ENCODE measurements at regions of chr7 and their contacts with region 1.

Region 1: DNA sequence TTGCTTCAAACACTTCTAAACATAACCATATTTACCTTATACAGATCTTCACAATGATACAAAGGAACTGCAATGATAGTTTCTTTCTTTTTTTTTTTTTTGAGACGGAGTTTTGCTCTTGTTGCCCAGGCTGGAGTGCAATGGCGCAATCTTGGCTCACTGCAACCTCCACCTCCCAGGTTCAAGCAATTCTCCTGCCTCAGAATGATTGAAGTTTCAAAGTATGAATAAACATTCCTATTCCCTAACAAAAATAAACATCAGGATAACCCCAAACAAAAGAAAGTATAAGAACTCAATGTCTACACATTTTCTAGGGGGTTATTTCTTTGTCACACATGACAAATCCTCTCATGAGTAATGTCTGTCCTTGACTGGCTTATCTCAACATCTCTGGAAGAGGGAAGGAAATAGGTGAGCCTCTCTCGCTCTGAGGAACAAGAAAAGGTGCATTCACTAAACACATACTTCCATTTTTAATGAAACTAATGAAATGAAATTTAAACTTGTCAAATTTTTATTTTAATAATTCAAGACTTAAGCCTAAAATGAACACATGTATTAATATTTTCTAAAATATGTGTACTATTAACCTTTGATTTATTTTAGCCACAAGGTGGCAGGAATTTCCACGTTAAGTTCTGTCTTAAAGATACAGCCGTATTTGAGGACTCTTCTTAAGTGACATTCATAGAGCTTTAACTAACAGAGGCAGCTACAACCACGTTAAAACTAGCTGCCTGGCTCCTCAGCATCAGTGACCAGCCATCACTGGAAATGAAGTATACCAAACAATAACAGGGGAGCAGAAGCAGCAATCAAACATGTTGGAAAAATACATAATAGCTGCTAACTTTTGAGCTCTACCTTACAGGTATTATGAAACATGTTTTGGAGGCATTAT is 58.3 kb downstream of the MALSU1 start:
- DNase-seq: peak; percentile 41 to 53 (median 51)
- ATAC-seq: peak; percentile 87
- H3K4me3 ChIP-seq: no peak overlapping the region
- H3K27ac ChIP-seq: peak overlapping the region; percentile 42; the same call in 1 of the 3 replicates
- H3K4me1 ChIP-seq: peaks cover 0 to 8% of the 10 kb centered on the region in 2 experiments; a peak in 2 of 5 replicates
- H3K27me3 ChIP-seq: no peaks in the 10 kb centered on the region
- CTCF ChIP-seq: peak; percentile 35 to 69 (median 43); a peak in 4 of 6 replicates
- EP300 ChIP-seq: no peak
- POLR2A ChIP-seq: no peak
- RAD21 ChIP-seq: peak; percentile 55 to 74

Region 2: DNA sequence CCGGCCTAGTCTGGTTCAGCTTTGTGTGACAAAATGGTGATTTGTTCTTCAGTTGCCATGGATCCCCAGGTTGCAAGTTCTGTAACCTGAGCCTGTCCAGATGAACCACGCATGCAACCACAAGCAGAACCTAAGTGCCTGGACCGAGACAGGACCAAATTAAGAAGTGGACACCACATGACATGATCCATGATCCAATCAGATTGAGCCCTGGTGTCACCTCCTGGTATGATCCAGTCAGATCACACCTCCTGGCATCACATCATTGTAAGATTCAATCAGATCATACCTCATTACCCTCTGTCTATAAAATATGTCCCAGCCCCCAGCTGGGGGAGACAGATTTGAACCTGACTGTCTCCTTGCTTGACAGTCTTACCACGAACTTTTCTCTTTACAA is 11.7 kb after region 1 on chr7:
- CTCF ChIA-PET with region 1: no interaction called
- POLR2A ChIA-PET with region 1: no interaction called
- in situ Hi-C with region 1: no loop called
- intact Hi-C with region 1: no loop called
- DNase-seq: no peak
- ATAC-seq: no peak; the same call in 2 of the 3 replicates
- H3K4me3 ChIP-seq: no peak overlapping the region
- H3K27ac ChIP-seq: no peak overlapping the region
- H3K4me1 ChIP-seq: peaks cover 0 to 8% of the 10 kb centered on the region in 2 experiments; a peak in 2 of 5 replicates
- H3K27me3 ChIP-seq: no peaks in the 10 kb centered on the region
- CTCF ChIP-seq: no peak
- EP300 ChIP-seq: no peak
- POLR2A ChIP-seq: no peak
- RAD21 ChIP-seq: no peak

Region 3: DNA sequence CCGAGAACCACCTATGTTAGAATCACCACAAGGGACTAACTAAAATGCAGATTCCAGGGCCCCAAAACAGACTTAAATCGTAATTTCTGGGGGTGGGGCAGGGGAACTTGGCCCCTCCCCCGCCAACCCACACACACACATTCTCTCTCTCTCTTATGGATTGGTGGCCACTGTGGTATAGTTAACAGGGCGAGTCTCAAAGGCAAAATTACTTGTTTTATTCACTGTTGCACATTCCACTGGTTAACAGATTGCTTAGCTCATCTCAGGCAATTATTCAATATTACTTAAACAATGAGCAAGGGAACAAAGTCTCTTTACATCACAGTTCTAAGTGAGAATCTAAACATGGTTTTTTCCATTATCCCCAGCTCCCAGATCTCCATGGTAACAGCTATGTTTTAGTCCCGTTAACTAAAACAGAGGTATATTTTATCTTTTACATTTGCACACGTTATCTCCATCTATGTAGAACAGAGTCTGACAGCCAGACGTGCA is 74.3 kb after region 1 on chr7:
- CTCF ChIA-PET with region 1: no interaction called
- POLR2A ChIA-PET with region 1: no interaction called
- in situ Hi-C with region 1: no loop called
- intact Hi-C with region 1: loop called (anchors 5 kb)
- DNase-seq: peak; percentile 41 to 56 (median 52)
- ATAC-seq: peak; percentile 62
- H3K4me3 ChIP-seq: no peak overlapping the region
- H3K27ac ChIP-seq: peak overlapping the region; percentile 41; the same call in 1 of the 3 replicates
- H3K4me1 ChIP-seq: peaks cover 11 to 48% of the 10 kb centered on the region in 2 experiments; a peak in 4 of 5 replicates
- H3K27me3 ChIP-seq: no peaks in the 10 kb centered on the region
- CTCF ChIP-seq: no peak
- EP300 ChIP-seq: peak; percentile 16; the same call in 1 of the 2 replicates
- POLR2A ChIP-seq: no peak
- RAD21 ChIP-seq: no peak